ENCODE measurements at regions of chr4 and their contacts with region 1.

Region 1: GRCh38 chr4:106809076-106809475 is 227.0 kb downstream of the DKK2 start:
- DNase-seq: peak; percentile 15
- H3K4me3 Mint-ChIP-seq: no peak overlapping the region
- H3K27ac Mint-ChIP-seq: no peak overlapping the region
- H3K4me1 Mint-ChIP-seq: no peaks in the 10 kb centered on the region
- H3K27me3 Mint-ChIP-seq: no peaks in the 10 kb centered on the region
- CTCF ChIP-seq: no peak

Region 2: GRCh38 chr4:106329041-106329618 is 479.9 kb before region 1 on chr4:
- CTCF ChIA-PET with region 1: no interaction called
- intact Hi-C with region 1: loop called (anchors 2 kb)
- DNase-seq: no peak
- H3K4me3 Mint-ChIP-seq: no peak overlapping the region
- H3K27ac Mint-ChIP-seq: no peak overlapping the region
- H3K4me1 Mint-ChIP-seq: no peaks in the 10 kb centered on the region
- H3K27me3 Mint-ChIP-seq: no peaks in the 10 kb centered on the region
- CTCF ChIP-seq: peak; percentile 32

Region 3: DNA sequence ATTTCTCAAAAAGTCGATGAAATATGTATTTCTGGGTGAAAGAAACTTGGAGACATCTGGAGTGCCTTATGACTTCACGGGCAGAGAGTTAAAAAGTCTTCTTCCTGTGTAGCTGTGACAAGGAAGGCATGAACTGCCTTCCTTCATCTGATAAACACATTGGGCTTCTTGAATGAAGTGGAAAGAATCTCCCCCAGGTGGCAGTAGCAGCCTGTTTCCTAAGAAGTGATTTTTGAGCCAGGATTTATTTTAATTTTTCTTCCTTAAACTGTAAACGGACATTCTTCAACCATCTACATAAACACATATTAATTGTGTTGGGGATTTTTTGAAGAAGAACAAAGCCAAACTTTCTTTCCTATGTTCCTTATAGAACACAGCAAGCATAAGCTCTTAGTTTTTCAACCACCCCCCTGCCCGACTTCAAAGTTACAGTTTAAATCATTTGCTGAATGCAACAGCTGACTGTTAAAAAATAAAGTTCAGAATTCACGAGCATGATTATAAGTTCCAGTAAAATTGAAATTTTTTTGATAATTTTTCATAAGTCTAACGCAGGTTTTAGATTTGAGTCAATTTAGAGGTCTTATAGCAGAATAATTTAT is 439.5 kb before region 1 on chr4:
- CTCF ChIA-PET with region 1: interaction called, 4 read pairs
- intact Hi-C with region 1: loop called (anchors 1 kb)
- DNase-seq: peak; percentile 43
- H3K4me3 Mint-ChIP-seq: no peak overlapping the region
- H3K27ac Mint-ChIP-seq: no peak overlapping the region
- H3K4me1 Mint-ChIP-seq: peaks cover 15% of the 10 kb centered on the region
- H3K27me3 Mint-ChIP-seq: no peaks in the 10 kb centered on the region
- CTCF ChIP-seq: peak; percentile 46

Region 4: GRCh38 chr4:106463622-106464021 is 345.5 kb before region 1 on chr4:
- CTCF ChIA-PET with region 1: no interaction called
- intact Hi-C with region 1: no loop called
- DNase-seq: no peak
- H3K4me3 Mint-ChIP-seq: no peak overlapping the region
- H3K27ac Mint-ChIP-seq: no peak overlapping the region
- H3K4me1 Mint-ChIP-seq: no peaks in the 10 kb centered on the region
- H3K27me3 Mint-ChIP-seq: no peaks in the 10 kb centered on the region
- CTCF ChIP-seq: no peak

Region 5: DNA sequence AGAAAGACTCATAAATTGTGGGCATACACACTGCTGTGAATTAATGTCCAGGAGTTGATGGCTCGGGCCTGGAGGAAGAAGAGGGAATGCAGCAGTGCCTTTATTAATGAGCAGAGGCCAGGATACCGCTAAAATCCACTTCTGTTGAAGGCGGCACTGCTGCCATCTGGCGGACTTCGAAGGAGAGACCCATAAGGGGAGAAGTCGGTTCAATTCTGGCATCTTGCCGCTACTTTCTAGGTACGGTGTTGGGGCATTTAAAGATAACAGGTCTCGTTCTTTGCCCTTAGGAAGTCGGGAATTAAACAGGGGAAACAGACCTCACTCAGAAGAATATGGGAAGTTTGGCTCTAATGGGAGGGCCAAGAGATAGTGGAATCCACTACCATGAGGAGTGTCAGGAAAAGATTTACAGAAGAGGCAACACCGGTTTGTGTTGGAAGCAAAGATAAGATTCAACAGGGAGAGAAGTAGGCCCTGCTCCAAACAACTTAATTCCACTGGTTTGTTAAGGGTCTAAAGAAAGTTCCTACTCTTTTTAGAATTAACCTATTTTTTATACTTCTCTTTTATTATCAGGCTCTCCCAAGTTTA is 306.9 kb before region 1 on chr4:
- CTCF ChIA-PET with region 1: no interaction called
- intact Hi-C with region 1: loop called (anchors 5 kb)
- DNase-seq: peak; percentile 61
- H3K4me3 Mint-ChIP-seq: peak overlapping the region; percentile 14
- H3K27ac Mint-ChIP-seq: no peak overlapping the region
- H3K4me1 Mint-ChIP-seq: no peaks in the 10 kb centered on the region
- H3K27me3 Mint-ChIP-seq: no peaks in the 10 kb centered on the region
- CTCF ChIP-seq: peak; percentile 66